Head of caudate nucleus (tissue), 42 donors: ENCODE measurements at regions of chr14 and their contacts with region 1.

Region 1: GRCh38 chr14:87896393-87897380 is 96.3 kb downstream of the GALC start:
- DNase-seq: peak in 9 of 42 donors; percentile 16 to 69 (median 34)

Region 2: DNA sequence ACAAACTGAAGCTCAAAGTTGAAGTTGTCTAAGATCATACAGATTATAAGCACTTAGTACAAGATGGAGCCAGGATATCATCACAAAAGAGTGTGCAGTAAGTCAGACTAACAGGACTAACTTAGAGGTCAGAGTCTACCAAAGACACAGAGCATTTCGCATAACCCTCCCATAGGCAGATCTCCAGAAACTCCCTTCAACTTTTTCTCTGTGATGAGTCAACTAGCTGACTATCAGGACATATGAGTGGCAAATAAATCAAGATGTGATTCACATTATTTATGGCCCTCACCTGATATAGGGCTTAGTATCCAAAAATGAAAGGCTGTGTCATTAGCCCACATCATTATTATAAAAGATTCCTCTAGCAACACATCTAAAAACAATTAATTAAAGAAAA is 388.4 kb before region 1 on chr14:
- intact Hi-C with region 1: no loop called
- DNase-seq: no peak

Region 3: GRCh38 chr14:87745507-87746118 is 151.1 kb before region 1 on chr14:
- intact Hi-C with region 1: loop called (anchors 10 kb)
- DNase-seq: peak in 20 of 42 donors; percentile 7 to 60 (median 22)

Region 4: GRCh38 chr14:87805315-87805723 is 91.4 kb before region 1 on chr14:
- intact Hi-C with region 1: loop called (anchors 10 kb)
- DNase-seq: peak in 34 of 42 donors; percentile 5 to 78 (median 38)

Region 5: GRCh38 chr14:87830443-87831096 is 66.1 kb before region 1 on chr14:
- intact Hi-C with region 1: no loop called
- DNase-seq: no peak

Region 6: DNA sequence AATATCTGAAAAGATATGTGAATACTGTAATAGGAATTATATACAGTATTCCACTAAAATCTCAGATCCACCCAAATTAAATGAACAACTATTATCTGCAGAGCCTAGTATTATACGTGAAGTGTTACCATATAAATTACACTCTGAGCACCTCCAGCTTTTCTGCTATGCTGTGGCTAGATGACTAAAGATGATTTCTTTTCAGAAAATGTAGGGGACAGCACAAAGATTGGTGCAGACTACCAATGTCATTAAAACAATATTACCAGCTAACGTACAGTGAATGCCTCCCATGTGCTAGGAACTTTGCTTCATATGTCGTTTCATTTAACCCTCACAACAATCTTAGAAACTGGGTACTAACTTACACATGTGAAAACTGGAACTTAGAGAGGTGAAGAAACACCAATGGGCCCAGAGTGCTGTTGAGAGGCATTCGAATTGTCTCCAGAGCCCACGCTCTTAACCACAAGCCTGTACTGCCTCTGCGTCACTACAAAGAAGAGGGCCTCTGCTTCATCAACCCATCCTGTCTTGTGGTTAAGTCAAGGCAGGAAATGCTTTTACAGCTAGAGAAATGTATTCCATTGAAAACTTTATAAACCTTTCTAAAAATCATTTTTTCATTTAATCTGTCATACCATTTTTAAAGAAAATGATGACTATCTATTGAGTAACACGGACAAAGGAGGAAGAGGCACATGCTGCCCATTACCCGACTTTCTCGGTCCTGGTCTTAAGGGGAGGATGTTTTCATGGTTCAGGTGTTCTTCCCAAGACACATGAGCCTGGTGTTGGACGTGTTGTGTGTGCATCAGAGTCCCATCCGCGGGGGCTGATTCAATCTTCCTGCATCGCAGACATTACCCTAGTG is 109.5 kb after region 1 on chr14:
- intact Hi-C with region 1: no loop called
- DNase-seq: no peak

Region 7: DNA sequence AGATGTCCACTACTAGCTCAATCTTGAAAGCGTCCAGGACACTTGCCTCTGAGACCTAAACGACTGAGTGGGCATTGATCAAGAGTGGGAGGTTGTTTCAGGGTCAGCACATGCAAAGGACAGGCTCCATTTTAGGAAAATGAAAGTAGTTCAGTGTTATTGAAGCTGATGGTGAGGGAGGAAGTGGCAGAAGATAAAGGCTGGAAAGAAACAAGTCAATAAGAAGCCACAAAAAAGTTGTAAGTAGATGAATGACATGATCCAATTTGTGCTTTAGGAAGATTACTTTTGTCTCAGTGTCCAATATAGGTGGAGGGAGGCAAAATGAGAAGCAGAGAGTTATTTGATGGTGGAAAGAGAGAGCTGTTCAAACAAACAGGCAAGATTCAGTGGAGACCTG is 130.2 kb after region 1 on chr14:
- intact Hi-C with region 1: no loop called
- DNase-seq: no peak